ENCODE measurements at regions of chr3 and their contacts with region 1.

Region 1: DNA sequence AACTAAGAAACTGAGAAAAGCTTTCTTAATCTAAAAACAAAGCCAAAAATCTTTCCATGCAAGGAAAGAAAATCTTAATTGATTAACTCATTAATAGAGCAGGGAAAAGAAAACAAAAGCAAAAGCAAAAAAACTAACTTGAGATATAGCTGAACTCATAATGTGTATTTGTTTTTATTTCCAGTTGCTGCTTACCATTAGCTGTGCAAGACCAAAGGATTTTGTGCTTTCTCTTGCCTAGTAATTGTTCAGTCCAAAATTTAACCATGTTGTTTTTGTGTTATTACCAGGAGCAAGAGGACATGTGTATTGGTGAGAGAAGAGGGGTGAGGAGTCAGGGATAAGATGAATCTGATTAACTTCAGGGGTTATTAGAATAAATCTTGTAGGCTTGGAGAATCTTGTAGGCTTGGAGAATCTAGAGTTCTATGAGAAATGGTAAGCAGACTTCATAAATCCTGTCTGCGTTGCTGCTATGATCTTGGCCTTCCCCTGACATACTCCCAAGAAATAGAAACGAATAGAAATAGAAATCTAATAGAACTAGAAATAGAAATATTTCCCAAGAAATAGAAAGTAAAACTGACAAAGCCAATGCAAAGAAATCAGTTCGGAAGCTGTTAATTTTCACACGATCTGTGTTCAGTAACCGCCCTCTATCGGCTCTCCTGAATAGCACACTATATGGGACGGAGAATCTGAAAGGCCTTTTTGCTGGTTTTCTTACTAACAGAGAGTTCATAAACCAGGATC is 72.6 kb upstream of the TNFSF10 start:
- DNase-seq: peak in 1 of 4 donors; percentile 32
- ATAC-seq: peak; percentile 91
- H3K4me3 ChIP-seq: peak overlapping the region; percentile 21 to 32
- H3K27ac ChIP-seq: peak overlapping the region; percentile 79 to 86
- H3K4me1 ChIP-seq: peaks cover 10 to 50% of the 10 kb centered on the region in 2 donors
- H3K27me3 ChIP-seq: no peaks in the 10 kb centered on the region
- CTCF ChIP-seq: peak; percentile 69 to 78

Region 2: DNA sequence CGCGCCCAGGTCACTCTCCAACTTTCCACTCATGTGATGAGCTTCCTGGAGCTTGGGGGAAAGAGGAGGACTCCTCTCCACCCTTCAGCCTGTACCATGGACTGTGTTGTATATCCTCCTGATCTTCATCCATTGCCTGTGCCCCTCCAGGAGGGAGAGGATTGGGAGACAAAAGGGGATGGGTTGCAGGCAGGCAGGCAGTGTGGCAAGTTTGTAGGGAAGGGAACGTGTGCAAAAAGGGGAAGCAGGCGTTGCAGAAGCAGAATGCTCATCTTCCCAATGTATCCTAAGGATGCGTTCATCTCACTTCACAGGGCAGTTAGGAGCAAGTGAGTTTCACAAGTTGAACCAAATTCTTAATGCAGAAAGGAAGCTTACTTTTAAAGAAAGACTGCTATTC is 119.5 kb before region 1 on chr3:
- intact Hi-C with region 1: loop called in 1 of 2 experiments (anchors 10 kb)
- DNase-seq: no peak
- ATAC-seq: peak; percentile 45
- H3K4me3 ChIP-seq: peak overlapping the region in 1 of 2 donors; percentile 32
- H3K27ac ChIP-seq: peak overlapping the region in 1 of 2 donors; percentile 59
- H3K4me1 ChIP-seq: peaks cover 0 to 18% of the 10 kb centered on the region in 2 donors
- H3K27me3 ChIP-seq: no peaks in the 10 kb centered on the region
- CTCF ChIP-seq: no peak

Region 3: DNA sequence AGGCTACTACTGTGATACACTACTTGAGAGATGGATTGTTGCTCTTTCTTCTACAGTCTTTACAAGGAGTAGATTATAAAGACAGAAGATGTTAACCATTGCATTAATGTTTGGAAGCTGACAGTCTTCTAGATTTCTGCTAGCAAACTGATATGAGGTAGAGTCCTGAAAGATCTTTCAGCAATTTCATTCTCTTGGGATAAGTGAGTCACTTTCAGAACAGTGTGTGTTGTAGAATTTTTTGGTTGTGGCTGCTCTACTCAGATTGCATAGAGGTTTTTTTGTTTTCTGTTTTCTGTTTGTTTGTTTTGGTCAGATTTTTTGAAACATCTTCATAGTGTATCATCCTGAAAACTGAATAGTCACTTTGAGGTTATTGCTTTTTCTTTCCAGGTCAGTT is 89.7 kb before region 1 on chr3:
- intact Hi-C with region 1: loop called in 1 of 2 experiments (anchors 10 kb)
- DNase-seq: no peak
- ATAC-seq: no peak
- H3K4me3 ChIP-seq: no peak overlapping the region
- H3K27ac ChIP-seq: no peak overlapping the region
- H3K4me1 ChIP-seq: peaks cover 0 to 6% of the 10 kb centered on the region in 2 donors
- H3K27me3 ChIP-seq: no peaks in the 10 kb centered on the region
- CTCF ChIP-seq: no peak

Region 4: DNA sequence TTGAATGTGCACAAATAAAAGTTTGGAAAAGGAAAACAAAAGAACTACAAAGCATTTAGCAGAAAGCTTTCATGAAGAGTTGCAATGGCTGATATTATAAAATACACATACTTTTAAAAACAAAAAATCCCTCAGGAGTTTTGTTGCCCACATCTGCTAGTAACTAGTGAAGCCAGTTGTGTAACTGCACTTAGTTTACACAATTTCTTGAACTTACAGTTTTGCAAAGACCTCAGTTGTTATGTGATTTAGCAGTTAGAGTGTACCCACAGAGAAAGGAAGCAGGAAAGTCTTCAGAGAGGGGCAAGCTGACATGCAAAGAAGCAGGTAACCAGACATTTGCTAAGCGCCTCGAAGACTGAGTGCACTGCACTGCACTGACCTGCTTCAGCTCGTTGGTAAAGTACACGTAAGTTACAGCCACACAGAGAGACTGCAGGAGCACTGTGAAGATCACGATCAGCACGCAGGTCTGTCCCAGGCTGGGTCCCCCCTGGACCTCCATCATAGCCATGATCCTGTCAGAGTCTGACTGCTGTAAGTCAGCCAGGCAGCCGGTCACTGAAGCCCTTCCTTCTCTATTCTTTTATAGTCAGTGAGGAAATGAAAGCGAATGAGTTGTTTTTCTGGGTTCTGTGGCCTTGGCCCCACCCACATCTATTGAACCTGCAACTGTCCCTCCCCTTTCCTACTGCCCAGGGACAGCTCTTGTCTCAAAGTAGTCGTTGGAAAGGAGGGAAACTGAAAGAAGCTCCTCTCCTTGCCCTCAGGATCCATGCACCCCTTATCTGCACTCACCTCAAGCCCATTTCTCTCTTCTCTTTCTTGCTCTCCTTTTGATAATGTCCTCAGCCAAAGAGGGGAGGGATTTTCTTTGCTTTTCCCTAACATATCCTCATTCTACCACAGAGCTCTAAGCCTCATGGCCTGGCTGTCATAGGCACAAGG is 72.7 kb before region 1 on chr3 and contains the start of gene TNFSF10:
- intact Hi-C with region 1: loop called in 1 of 2 experiments (anchors 10 kb)
- DNase-seq: peak in 3 of 4 donors; percentile 33 to 80 (median 69)
- ATAC-seq: peak; percentile 91
- H3K4me3 ChIP-seq: peak within 1 kb of the TSS; percentile 37 to 59
- H3K27ac ChIP-seq: peak within 1 kb of the TSS; percentile 86 to 95
- H3K4me1 ChIP-seq: peaks cover 8 to 38% of the 10 kb centered on the region in 2 donors
- H3K27me3 ChIP-seq: no peaks in the 10 kb centered on the region
- CTCF ChIP-seq: no peak
- polyA plus RNA-seq, gene TNFSF10: 32.8 to 53.4 (median 43.0) TPM